MCF 10A (cell line): ENCODE measurements at regions of chr4 and their contacts with region 1.

Region 1: GRCh38 chr4:25144870-25145481 is 15.3 kb downstream of the SEPSECS start:
- DNase-seq: peak; percentile 46
- H3K4me3 Mint-ChIP-seq: no peak overlapping the region
- H3K27ac Mint-ChIP-seq: no peak overlapping the region
- H3K4me1 Mint-ChIP-seq: no peaks in the 10 kb centered on the region
- H3K27me3 Mint-ChIP-seq: no peaks in the 10 kb centered on the region
- CTCF ChIP-seq: peak; percentile 36

Region 2: DNA sequence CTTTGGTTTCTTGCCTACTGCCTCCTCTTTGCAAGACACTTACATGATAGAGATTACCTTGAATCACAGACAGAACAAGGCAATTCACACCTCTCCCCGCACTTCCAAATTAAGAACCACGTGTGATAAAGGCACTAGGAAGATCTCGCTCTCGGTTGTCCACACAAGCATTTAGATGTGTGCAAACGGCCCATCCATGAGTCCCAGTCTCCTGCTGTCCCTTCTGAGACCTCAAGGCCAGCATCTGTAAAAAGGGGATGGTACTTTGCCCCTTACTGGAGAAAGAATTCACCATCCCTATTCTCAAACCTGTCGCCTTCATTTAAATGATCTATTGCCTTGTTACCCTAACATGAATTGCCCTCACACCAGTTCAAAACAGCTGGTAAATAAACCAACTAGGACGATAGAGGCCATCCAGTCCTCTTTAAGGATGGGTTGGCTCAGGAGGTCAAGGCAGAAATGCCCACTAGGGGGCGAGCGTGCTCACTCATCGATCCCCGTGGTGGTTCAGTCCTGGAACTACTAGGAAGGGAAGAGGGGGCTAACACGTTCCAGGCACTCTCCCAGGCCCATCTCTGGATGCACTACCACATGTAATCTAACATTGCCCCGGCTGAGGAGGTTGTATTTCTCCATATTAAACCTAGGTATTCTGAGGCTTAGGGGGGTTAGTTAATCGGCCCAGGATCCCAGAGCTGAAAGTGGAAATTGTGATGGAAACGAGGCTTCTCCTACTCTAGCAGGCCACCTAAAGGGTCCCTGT is 656.4 kb before region 1 on chr4:
- CTCF ChIA-PET with region 1: interaction called, 6 read pairs
- POLR2A ChIA-PET with region 1: no interaction called
- intact Hi-C with region 1: loop called (anchors 1 kb)
- DNase-seq: peak; percentile 65
- H3K4me3 Mint-ChIP-seq: no peak overlapping the region
- H3K27ac Mint-ChIP-seq: no peak overlapping the region
- H3K4me1 Mint-ChIP-seq: no peaks in the 10 kb centered on the region
- H3K27me3 Mint-ChIP-seq: peaks cover 13% of the 10 kb centered on the region
- CTCF ChIP-seq: peak; percentile 85

Region 3: GRCh38 chr4:24736066-24736465 is 408.9 kb before region 1 on chr4:
- CTCF ChIA-PET with region 1: no interaction called
- POLR2A ChIA-PET with region 1: no interaction called
- intact Hi-C with region 1: loop called (anchors 10 kb)
- DNase-seq: peak; percentile 56
- H3K4me3 Mint-ChIP-seq: no peak overlapping the region
- H3K27ac Mint-ChIP-seq: no peak overlapping the region
- H3K4me1 Mint-ChIP-seq: peaks cover 4% of the 10 kb centered on the region
- H3K27me3 Mint-ChIP-seq: no peaks in the 10 kb centered on the region
- CTCF ChIP-seq: peak; percentile 58

Region 4: GRCh38 chr4:24973733-24974601 is 171.0 kb before region 1 on chr4:
- CTCF ChIA-PET with region 1: interaction called, 10 read pairs
- POLR2A ChIA-PET with region 1: no interaction called
- intact Hi-C with region 1: no loop called
- DNase-seq: peak; percentile 59
- H3K4me3 Mint-ChIP-seq: no peak overlapping the region
- H3K27ac Mint-ChIP-seq: no peak overlapping the region
- H3K4me1 Mint-ChIP-seq: peaks cover 35% of the 10 kb centered on the region
- H3K27me3 Mint-ChIP-seq: peaks cover 14% of the 10 kb centered on the region
- CTCF ChIP-seq: no peak

Region 5: GRCh38 chr4:24980064-24980690 is 164.8 kb before region 1 on chr4:
- CTCF ChIA-PET with region 1: interaction called, 68 read pairs
- POLR2A ChIA-PET with region 1: interaction called, 3 read pairs
- intact Hi-C with region 1: loop called (anchors 1 kb)
- DNase-seq: peak; percentile 73
- H3K4me3 Mint-ChIP-seq: no peak overlapping the region
- H3K27ac Mint-ChIP-seq: no peak overlapping the region
- H3K4me1 Mint-ChIP-seq: peaks cover 13% of the 10 kb centered on the region
- H3K27me3 Mint-ChIP-seq: peaks cover 5% of the 10 kb centered on the region
- CTCF ChIP-seq: peak; percentile 81

Region 6: DNA sequence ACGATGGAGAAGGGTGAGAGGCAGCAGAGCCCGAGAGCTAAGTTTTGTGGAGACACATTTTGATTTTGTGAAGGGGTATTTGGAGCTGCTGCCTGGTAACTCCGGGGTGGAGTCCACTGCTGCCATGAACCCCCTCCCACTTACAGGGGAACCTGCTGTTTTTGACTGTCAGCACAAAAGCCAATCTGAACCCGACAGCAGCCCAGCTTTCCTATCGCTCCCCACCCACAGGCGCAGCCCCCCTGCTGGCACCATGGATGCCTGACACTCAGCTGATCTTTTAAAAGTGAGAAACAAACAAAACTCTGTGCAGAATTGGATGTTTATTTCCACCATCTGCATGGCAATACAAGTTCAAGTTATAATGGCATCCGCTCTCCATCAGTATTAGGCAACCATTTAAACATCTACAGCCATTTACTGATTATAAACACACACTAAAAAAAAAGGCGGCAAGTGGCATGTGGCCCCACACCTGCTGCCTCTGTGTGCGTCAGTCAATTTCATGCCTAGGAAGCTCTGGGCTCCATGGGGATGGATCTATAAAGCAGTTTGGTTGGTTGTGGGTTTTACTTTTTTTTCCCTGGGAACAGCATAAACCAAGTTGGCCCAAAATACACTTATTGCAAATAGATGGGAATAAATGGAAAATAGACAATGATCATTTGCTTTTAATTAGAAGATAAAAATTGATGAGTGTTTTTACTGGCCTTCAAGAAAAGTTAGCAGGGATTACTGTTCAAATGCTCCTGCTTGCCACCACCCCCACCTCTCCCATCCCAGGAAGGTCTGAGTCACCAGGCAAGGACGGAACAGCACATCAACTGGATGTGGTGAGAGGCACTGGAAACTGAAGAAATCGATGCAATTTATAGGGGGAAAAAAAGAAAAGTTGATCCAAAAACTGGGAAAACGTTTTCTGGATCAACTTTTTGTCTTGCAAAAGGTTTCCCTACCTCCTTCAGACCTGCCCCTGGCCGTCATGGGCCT is 30.8 kb before region 1 on chr4:
- CTCF ChIA-PET with region 1: interaction called, 11 read pairs
- POLR2A ChIA-PET with region 1: no interaction called
- intact Hi-C with region 1: no loop called
- DNase-seq: peak; percentile 42
- H3K4me3 Mint-ChIP-seq: no peak overlapping the region
- H3K27ac Mint-ChIP-seq: no peak overlapping the region
- H3K4me1 Mint-ChIP-seq: no peaks in the 10 kb centered on the region
- H3K27me3 Mint-ChIP-seq: no peaks in the 10 kb centered on the region
- CTCF ChIP-seq: no peak

Region 7: DNA sequence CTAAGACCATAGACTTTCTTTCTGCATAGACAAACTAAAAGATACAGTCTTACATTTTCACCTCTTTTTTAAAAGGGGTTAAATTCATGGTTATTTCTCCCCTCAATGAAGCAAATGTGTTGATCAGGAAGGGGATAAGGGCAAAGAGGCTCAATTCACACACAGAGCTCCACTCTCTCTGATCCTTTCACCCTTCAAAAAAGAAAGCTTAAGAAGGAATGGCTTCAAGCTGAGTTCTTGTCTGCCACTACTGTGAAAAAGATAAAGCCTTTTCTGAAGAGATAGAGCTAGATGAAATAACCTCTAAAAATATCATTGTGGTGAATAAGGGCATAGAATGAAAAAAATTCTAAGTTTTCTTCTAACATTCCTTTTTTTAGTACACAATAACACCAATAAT is 13.1 kb before region 1 on chr4:
- CTCF ChIA-PET with region 1: interaction called, 16 read pairs
- POLR2A ChIA-PET with region 1: no interaction called
- intact Hi-C with region 1: no loop called
- DNase-seq: no peak
- H3K4me3 Mint-ChIP-seq: no peak overlapping the region
- H3K27ac Mint-ChIP-seq: no peak overlapping the region
- H3K4me1 Mint-ChIP-seq: no peaks in the 10 kb centered on the region
- H3K27me3 Mint-ChIP-seq: no peaks in the 10 kb centered on the region
- CTCF ChIP-seq: no peak

Region 8: DNA sequence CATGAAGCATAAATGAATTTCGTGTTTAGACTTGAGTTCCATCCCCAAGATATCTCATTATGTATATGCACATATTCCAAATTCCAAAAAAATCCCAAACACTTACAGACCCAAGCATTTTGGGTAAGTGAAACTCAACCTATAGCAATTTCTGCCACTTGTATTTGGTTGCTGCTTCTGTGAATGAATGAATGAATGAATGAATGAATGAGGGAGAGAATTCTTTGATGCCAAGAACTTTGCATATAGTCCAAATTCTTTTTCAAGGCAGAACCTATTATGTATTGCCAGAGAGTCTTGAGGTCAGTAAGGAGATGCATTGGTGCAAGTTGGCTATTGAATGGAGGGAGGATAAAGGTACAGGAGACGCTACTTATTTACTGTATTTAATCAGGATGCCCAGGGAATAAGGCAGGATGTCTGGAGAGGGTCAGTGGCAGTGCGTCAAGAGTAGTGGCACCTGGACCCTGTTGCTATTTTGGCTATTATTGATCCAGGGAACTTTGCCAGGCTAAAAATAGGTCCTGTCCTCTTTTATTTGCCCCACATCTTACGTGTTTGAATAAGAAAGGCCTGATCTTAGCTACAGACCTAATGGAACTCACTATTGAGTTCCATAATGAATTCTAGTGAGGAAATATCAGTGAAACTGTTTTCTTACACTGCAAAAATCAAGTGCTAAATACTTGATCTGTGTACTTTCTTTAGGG is 266.0 kb after region 1 on chr4:
- CTCF ChIA-PET with region 1: no interaction called
- POLR2A ChIA-PET with region 1: no interaction called
- intact Hi-C with region 1: no loop called
- DNase-seq: no peak
- H3K4me3 Mint-ChIP-seq: no peak overlapping the region
- H3K27ac Mint-ChIP-seq: no peak overlapping the region
- H3K4me1 Mint-ChIP-seq: no peaks in the 10 kb centered on the region
- H3K27me3 Mint-ChIP-seq: no peaks in the 10 kb centered on the region
- CTCF ChIP-seq: no peak